Right cardiac atrium (tissue), 5 donors: ENCODE measurements at regions of chr15 and their contacts with region 1.

Region 1: DNA sequence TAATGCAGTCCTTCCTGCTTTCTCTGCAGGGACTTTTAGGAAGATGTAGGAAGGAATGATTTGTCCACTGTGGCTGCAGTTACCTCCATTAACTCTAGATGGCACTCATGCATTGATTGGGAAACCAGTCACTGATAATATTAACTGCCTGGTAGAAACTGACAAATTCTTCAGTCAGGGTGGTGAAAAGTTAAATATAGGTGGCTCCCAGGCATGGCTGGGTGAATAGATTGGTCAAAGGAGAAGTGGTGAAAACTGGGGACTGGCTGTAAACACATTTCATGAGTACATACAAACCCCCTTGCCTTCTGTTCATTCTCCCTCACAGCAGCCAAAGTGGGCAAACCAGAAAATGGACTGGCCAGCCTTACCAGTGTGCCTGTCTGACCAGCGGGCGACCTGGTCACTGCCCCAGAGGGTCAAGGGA is 333.4 kb downstream of the THSD4 start:
- DNase-seq: no peak
- ATAC-seq: peak; percentile 67 to 70
- H3K4me3 ChIP-seq: no peak overlapping the region
- H3K27ac ChIP-seq: peak overlapping the region; percentile 88
- H3K4me1 ChIP-seq: no peaks in the 10 kb centered on the region
- H3K27me3 ChIP-seq: no peaks in the 10 kb centered on the region

Region 2: GRCh38 chr15:71011503-71012155 is 437.1 kb before region 1 on chr15:
- intact Hi-C with region 1: loop called in 2 of 4 experiments (anchors 10 kb)
- DNase-seq: no peak
- ATAC-seq: peak; percentile 65 to 71
- H3K4me3 ChIP-seq: no peak overlapping the region
- H3K27ac ChIP-seq: no peak overlapping the region
- H3K4me1 ChIP-seq: peaks cover 1% of the 10 kb centered on the region
- H3K27me3 ChIP-seq: no peaks in the 10 kb centered on the region

Region 3: GRCh38 chr15:71114896-71115554 is 333.7 kb before region 1 on chr15 and contains the start of gene THSD4:
- intact Hi-C with region 1: loop called in 2 of 4 experiments (anchors 5 to 10 kb)
- DNase-seq: peak; percentile 73 to 89 (median 89)
- ATAC-seq: peak; percentile 70 to 75
- H3K4me3 ChIP-seq: peak within 1 kb of the TSS; percentile 81
- H3K27ac ChIP-seq: peak within 1 kb of the TSS; percentile 92
- H3K4me1 ChIP-seq: no peaks in the 10 kb centered on the region
- H3K27me3 ChIP-seq: no peaks in the 10 kb centered on the region
- total RNA-seq, gene THSD4: 63.6 to 93.8 (median 73.8) TPM

Region 4: GRCh38 chr15:71282076-71282475 is 166.6 kb before region 1 on chr15:
- intact Hi-C with region 1: no loop called
- DNase-seq: no peak
- ATAC-seq: peak; percentile 22 to 47
- H3K4me3 ChIP-seq: no peak overlapping the region
- H3K27ac ChIP-seq: no peak overlapping the region
- H3K4me1 ChIP-seq: no peaks in the 10 kb centered on the region
- H3K27me3 ChIP-seq: no peaks in the 10 kb centered on the region

Region 5: DNA sequence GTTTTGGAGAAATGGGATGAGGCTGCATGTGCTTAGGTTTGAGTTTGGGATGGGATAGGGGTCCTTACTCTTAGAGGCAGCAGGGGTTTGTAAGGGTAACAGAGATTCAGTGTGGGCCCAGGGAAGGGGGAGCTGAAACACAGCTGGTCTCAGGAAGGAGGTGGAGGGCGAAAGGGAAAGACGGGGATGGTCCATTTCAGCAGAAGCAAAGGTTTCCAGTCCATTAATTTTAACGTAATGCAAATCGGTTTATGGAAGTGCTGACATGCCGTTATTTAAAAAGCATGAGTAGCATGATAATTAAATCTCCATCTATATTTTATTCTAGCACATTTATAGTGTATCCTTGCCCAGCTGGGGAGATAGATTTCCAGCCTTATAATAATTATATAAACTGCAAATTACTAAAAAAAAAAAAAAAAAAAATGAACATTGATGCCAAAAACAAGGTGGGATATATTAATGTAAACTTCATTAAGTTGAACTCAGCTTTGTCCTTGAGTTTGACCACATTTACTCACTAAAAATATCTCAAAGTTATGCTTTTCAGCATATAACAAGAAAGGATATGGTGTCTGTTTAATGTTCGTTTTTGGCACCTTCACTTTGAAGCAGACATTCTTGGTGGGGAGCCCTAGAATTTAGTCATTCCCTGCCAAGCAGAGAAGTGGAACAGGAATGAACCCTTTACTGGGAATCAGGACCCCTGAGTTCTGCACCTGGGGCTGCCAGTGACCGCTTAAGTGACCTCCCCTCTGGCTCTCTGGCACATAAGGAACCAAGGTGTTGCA is 98.8 kb before region 1 on chr15:
- intact Hi-C with region 1: no loop called
- DNase-seq: no peak
- ATAC-seq: no peak
- H3K4me3 ChIP-seq: no peak overlapping the region
- H3K27ac ChIP-seq: no peak overlapping the region
- H3K4me1 ChIP-seq: no peaks in the 10 kb centered on the region
- H3K27me3 ChIP-seq: no peaks in the 10 kb centered on the region

Region 6: DNA sequence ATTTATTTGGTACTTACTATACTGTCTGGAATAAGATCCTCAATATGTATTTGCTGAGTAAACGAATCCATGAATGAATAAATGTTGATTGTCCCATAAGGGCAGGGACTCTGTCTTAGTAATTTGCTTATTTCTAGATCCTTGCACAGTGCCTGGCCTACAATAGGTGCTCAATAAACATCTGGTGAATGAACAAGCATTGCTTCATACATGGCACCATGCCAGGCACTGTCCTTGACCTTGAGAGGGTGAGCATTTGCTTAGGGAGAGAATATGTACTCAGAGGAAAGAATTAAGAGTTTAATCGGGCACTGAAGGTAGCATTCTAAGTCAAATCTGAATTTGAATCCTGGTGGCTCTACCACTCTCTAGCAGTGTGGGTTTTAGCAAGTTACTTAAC is 51.3 kb before region 1 on chr15:
- intact Hi-C with region 1: no loop called
- DNase-seq: peak in 2 of 3 donors; percentile 31 to 53
- ATAC-seq: peak in 1 of 2 donors; percentile 28
- H3K4me3 ChIP-seq: no peak overlapping the region
- H3K27ac ChIP-seq: no peak overlapping the region
- H3K4me1 ChIP-seq: no peaks in the 10 kb centered on the region
- H3K27me3 ChIP-seq: no peaks in the 10 kb centered on the region

Region 7: DNA sequence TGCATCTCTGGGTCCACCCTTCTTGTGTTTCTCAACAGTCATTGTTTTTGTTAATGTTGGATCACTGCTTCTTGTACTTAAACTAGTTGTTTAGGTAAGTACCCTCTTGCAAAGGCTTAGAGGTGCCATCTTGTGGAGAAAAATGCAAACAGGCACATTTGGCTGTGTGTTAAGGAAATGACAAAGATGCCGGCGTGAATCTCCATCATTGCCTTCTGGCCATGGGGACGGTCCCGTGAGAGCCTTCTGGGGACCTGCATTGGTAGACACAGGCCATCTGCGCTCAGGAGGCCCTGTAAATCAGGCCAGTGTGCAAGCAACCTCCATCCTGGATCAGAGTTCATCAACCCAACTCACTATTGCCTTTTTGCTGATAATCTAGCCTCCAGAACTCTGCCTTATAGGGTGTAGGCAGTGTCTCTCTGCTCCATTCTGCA is 203.1 kb after region 1 on chr15:
- intact Hi-C with region 1: loop called in 2 of 4 experiments (anchors 10 kb)
- DNase-seq: peak in 1 of 3 donors; percentile 50
- ATAC-seq: peak; percentile 29 to 44
- H3K4me3 ChIP-seq: no peak overlapping the region
- H3K27ac ChIP-seq: no peak overlapping the region
- H3K4me1 ChIP-seq: peaks cover 2% of the 10 kb centered on the region
- H3K27me3 ChIP-seq: no peaks in the 10 kb centered on the region

Region 8: GRCh38 chr15:71730277-71731144 is 281.8 kb after region 1 on chr15:
- intact Hi-C with region 1: loop called (anchors 5 kb)
- DNase-seq: peak in 2 of 3 donors; percentile 41 to 72
- ATAC-seq: peak; percentile 86
- H3K4me3 ChIP-seq: no peak overlapping the region
- H3K27ac ChIP-seq: no peak overlapping the region
- H3K4me1 ChIP-seq: no peaks in the 10 kb centered on the region
- H3K27me3 ChIP-seq: no peaks in the 10 kb centered on the region

Region 9: DNA sequence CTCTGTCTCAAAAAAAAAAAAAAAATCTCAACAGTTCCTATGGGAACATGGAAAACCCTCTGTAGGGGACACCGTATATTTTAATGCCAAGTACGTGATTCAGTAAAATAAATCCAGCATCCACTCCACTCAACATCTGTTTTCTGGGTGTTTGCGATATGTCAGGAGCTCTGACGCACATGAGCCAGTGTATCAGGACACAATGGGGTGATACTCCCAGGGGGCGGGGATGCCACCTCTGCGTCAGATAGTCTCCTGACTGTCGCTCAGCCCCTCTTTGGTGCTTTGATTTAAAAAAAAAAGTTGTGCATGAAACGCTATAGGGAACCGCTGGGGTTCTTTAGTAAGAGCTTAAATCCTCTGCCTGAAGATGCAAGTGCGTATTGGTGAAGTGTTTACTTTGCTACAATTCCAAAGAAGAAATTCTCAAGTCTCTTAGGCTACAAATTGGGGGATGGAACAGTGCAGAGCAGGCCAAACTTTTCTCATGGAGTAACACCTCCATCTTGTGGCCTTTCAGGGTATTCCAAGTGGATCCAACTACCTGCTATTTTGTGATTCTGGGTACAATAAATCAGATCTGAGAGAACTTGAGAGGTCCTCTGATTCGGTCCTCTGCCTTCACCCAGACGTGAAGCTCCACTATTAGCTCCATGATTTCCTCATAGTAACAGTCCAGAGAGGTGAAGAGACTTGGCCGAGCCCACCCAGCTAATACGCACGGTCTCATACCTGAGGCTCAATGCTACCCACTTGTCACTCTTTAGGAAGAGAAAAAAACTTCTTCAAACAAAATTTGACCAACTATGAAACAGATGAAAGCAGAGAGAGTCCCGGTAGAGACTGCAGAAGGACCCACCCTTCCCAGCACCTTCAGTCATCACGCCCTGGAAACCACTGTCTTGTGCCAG is 352.4 kb after region 1 on chr15:
- intact Hi-C with region 1: loop called in 2 of 4 experiments (anchors 10 kb)
- DNase-seq: no peak
- ATAC-seq: peak; percentile 85
- H3K4me3 ChIP-seq: no peak overlapping the region
- H3K27ac ChIP-seq: no peak overlapping the region
- H3K4me1 ChIP-seq: no peaks in the 10 kb centered on the region
- H3K27me3 ChIP-seq: no peaks in the 10 kb centered on the region